ENCODE measurements at regions of chr1 and their contacts with region 1.

Region 1: GRCh38 chr1:145891587-145892485 is 6.2 kb upstream of the ANKRD35 start:
- DNase-seq: peak; percentile 97
- ATAC-seq: peak; percentile 98
- H3K4me3 ChIP-seq: peak overlapping the region in 1 of 2 experiments; percentile 25; a peak in 2 of 4 replicates
- H3K27ac ChIP-seq: peak overlapping the region; percentile 78
- H3K4me1 ChIP-seq: peaks cover 29 to 37% of the 10 kb centered on the region in 2 experiments
- H3K27me3 ChIP-seq: no peaks in the 10 kb centered on the region
- CTCF ChIP-seq: peak; percentile 96 to 99 (median 98)
- POLR2A ChIP-seq: no peak
- RAD21 ChIP-seq: peak; percentile 98

Region 2: DNA sequence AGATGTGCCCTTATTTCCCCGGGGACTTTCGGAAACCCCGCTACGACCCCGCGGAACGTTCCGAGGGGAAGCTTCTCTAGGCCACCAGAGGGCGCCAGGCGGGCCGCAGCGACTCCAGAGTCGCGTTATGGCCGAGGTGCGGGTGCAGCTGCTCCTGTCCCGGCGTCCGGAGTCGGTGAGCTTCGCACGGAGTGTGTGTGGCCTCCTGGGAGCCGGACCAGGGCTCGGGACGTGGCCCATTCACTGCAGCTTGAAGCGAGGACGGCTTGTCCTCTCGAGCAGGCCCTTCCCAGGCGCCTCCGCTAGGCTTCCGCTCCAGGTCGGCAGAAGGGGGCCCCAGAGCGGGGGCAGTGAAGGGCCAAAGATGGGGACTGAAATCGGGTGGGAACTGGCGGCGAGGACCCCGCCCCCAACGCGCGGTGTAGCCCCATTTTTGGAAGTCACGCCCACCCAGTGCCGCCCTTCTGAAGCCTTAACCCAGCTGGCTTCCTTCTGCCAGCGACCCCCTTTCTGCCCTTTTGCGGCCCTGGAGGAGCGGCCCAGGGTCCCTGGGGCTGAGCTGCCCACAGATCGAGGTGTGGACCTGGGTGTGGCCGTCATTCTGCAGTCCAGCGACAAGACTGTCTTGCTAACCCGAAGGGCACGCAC is 46.2 kb before region 1 on chr1 and contains the start of gene NUDT17:
- CTCF ChIA-PET with region 1: interaction called, 11 read pairs
- POLR2A ChIA-PET with region 1: interaction called, 3 read pairs
- RAD21 ChIA-PET with region 1: no interaction called
- intact Hi-C with region 1: no loop called
- DNase-seq: peak; percentile 26
- ATAC-seq: peak; percentile 88
- H3K4me3 ChIP-seq: peak within 1 kb of the TSS; percentile 38 to 49
- H3K27ac ChIP-seq: peak within 1 kb of the TSS; percentile 8; the same call in 1 of the 2 replicates
- H3K4me1 ChIP-seq: peaks cover 4 to 14% of the 10 kb centered on the region in 2 experiments
- H3K27me3 ChIP-seq: no peaks in the 10 kb centered on the region
- CTCF ChIP-seq: peak; percentile 73 to 96 (median 96); a peak in 5 of 6 replicates
- POLR2A ChIP-seq: no peak
- RAD21 ChIP-seq: peak; percentile 67
- total RNA-seq, gene NUDT17: 1.8 TPM

Region 3: DNA sequence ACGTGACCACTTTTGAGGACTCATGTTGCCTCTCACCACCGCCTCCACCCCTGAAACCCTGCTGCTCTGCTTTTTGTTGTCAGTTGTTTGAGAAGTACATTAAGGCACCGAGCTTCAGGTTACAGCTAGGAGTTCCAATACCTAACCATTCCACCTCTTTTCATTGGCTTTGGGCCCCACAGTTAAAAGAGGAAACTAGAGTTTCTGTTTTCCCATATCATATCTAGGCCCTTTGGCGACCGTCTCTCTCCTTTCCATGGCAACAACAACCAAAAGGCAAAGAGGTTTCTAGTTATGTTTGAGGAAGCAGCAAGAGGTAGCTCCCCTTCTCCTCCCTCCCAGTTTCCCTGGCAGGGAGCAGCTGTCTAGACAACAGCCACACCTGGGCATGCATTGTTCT is 12.1 kb before region 1 on chr1:
- CTCF ChIA-PET with region 1: interaction called, 19 read pairs
- POLR2A ChIA-PET with region 1: no interaction called
- RAD21 ChIA-PET with region 1: no interaction called
- intact Hi-C with region 1: no loop called
- DNase-seq: no peak
- ATAC-seq: no peak
- H3K4me3 ChIP-seq: no peak overlapping the region
- H3K27ac ChIP-seq: no peak overlapping the region
- H3K4me1 ChIP-seq: peaks cover 0 to 14% of the 10 kb centered on the region in 2 experiments; a peak in 3 of 4 replicates
- H3K27me3 ChIP-seq: peaks cover 4% of the 10 kb centered on the region; the same call in 1 of the 2 replicates
- CTCF ChIP-seq: no peak
- POLR2A ChIP-seq: no peak
- RAD21 ChIP-seq: no peak

Region 4: GRCh38 chr1:145912128-145912641 is 20.3 kb after region 1 on chr1:
- CTCF ChIA-PET with region 1: interaction called, 19 read pairs
- POLR2A ChIA-PET with region 1: interaction called, 3 read pairs
- RAD21 ChIA-PET with region 1: no interaction called
- intact Hi-C with region 1: loop called (anchors 1 kb)
- DNase-seq: no peak
- ATAC-seq: no peak
- H3K4me3 ChIP-seq: no peak overlapping the region
- H3K27ac ChIP-seq: no peak overlapping the region
- H3K4me1 ChIP-seq: peaks cover 5 to 20% of the 10 kb centered on the region in 2 experiments; a peak in 3 of 4 replicates
- H3K27me3 ChIP-seq: no peaks in the 10 kb centered on the region
- CTCF ChIP-seq: no peak
- POLR2A ChIP-seq: no peak
- RAD21 ChIP-seq: no peak

Region 5: DNA sequence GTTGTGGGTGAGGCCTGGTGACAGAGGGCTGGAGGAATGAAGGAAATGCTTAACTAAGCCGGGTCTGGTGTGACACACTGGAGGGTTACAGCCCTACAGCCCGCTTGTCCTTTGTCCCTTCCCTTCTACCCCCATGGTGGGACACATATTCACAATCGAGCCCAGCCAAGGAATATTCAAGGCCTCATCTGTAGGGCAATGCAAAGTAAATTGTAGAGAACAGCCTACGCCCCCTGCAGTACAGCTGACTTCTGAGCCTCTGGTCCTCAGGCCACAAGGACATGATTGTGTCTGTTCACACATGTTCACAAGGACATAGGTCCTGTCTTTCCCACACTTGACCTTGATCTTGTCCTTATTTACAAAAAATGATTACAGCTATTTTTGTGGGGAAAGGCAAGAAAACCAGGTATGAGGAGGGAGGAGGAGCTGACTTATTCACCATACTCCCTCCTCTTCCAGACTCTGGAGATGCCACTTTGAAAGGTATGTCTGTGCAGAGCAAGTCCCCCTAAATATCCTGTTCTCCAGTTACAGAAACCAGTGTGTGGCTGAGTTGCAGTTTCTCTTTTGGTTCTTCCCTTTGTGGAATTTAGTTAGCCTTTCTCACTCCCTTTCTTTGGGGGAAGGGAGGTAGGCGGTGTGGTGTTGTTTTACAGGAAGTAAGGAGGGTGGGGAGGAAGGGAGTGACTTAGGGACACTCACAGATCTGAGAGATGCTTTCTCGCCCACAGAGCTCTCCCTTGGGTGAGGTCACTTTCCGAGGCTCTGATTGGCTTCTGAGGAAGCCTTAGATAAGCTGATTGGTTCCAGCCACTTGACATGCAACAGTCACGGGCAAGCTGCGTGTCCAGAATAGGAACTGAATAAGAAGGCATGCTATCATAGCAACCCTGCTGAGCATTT is 87.3 kb after region 1 on chr1:
- CTCF ChIA-PET with region 1: interaction called, 7 read pairs
- POLR2A ChIA-PET with region 1: no interaction called
- RAD21 ChIA-PET with region 1: interaction called in 1 of 2 experiments, 4 read pairs
- intact Hi-C with region 1: loop called (anchors 5 kb)
- DNase-seq: peak; percentile 96
- ATAC-seq: peak; percentile 95
- H3K4me3 ChIP-seq: peak overlapping the region; percentile 12 to 37
- H3K27ac ChIP-seq: peak overlapping the region; percentile 89
- H3K4me1 ChIP-seq: peaks cover 30 to 45% of the 10 kb centered on the region in 2 experiments
- H3K27me3 ChIP-seq: no peaks in the 10 kb centered on the region
- CTCF ChIP-seq: peak in 2 of 3 experiments; percentile 22 to 37; a peak in 3 of 6 replicates
- POLR2A ChIP-seq: no peak
- RAD21 ChIP-seq: no peak

Region 6: DNA sequence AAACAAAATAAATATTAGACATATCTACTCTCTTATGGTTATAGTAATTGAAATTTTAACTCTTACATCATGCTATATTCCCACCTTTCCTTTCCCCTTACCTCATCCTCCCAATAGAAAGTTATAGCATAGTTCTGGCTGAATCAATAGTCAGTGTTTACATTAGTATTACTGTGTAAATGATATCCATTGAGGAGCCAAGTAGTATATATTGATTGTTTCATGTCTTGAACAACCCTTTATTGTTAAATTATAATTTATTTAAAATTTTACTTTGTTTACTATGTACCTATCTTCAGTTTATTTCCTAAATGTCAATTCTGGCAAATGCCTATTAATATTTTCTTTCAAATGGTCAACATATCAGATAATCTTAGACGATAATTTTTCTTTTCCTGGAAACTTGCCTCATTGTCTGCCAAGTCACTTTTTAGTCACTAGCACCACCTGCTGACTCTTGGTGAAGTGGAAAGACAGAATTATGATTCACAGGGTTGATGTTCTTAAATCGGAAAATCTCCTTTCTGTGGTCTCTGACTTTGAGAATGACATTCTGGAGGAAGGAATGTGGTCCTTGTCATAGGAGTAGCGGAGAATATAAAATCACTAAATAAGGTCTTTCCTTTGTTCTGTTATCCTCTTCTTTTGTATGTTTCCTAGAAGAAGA is 121.0 kb after region 1 on chr1:
- CTCF ChIA-PET with region 1: interaction called, 6 read pairs
- POLR2A ChIA-PET with region 1: interaction called, 5 read pairs
- RAD21 ChIA-PET with region 1: interaction called in 1 of 2 experiments, 3 read pairs
- intact Hi-C with region 1: loop called (anchors 1 kb)
- DNase-seq: peak; percentile 83
- ATAC-seq: peak; percentile 84
- H3K4me3 ChIP-seq: no peak overlapping the region
- H3K27ac ChIP-seq: no peak overlapping the region
- H3K4me1 ChIP-seq: peaks cover 0 to 5% of the 10 kb centered on the region in 2 experiments; a peak in 2 of 4 replicates
- H3K27me3 ChIP-seq: no peaks in the 10 kb centered on the region
- CTCF ChIP-seq: peak; percentile 58 to 95 (median 86)
- POLR2A ChIP-seq: no peak
- RAD21 ChIP-seq: peak; percentile 97

Measured in HCT116 (cell line).